Activated CD4-positive, alpha-beta T cell treated with anti-CD3 and anti-CD28 coated beads for 36 hours (primary cell): ENCODE measurements at regions of chr6 and their contacts with region 1.

Region 1: DNA sequence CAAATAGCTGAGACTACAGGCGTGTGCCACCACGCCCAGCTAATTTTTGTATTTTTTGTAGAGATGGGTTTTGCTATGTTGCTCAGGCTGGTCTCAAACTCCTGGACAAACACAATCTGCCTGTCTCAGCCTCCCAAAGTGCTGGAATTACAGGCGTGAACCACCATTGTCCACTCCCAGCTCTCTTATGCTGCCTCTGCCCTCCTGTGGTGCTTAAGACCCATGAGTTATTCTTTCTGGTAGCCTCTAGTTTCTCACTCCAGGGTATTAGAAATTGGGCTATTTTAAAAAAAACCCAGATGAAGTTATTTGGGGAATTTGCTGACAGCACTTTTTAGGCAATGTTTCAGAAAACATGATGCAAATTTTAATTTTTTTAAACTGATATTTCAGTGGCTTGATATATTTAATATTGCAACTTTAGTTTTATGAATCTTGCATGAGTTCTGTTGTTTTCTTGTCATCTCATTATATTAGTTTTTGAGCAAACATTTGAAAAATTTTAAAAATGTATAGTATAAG is 114.0 kb upstream of the FOXO3 start:
- DNase-seq: no peak
- ATAC-seq: no peak
- H3K4me3 Mint-ChIP-seq: no peak overlapping the region
- H3K27ac Mint-ChIP-seq: no peak overlapping the region
- H3K4me1 Mint-ChIP-seq: peaks cover 23% of the 10 kb centered on the region
- H3K27me3 Mint-ChIP-seq: peaks cover 30% of the 10 kb centered on the region

Region 2: GRCh38 chr6:107964671-107965340 is 481.9 kb before region 1 on chr6:
- CTCF ChIA-PET with region 1: no interaction called
- POLR2A ChIA-PET with region 1: no interaction called
- intact Hi-C with region 1: loop called in 1 of 2 experiments (anchors 1 kb)
- DNase-seq: peak; percentile 90
- ATAC-seq: peak; percentile 96
- H3K4me3 Mint-ChIP-seq: no peak overlapping the region
- H3K27ac Mint-ChIP-seq: peak overlapping the region; percentile 88
- H3K4me1 Mint-ChIP-seq: peaks cover 25% of the 10 kb centered on the region
- H3K27me3 Mint-ChIP-seq: peaks cover 2% of the 10 kb centered on the region

Region 3: DNA sequence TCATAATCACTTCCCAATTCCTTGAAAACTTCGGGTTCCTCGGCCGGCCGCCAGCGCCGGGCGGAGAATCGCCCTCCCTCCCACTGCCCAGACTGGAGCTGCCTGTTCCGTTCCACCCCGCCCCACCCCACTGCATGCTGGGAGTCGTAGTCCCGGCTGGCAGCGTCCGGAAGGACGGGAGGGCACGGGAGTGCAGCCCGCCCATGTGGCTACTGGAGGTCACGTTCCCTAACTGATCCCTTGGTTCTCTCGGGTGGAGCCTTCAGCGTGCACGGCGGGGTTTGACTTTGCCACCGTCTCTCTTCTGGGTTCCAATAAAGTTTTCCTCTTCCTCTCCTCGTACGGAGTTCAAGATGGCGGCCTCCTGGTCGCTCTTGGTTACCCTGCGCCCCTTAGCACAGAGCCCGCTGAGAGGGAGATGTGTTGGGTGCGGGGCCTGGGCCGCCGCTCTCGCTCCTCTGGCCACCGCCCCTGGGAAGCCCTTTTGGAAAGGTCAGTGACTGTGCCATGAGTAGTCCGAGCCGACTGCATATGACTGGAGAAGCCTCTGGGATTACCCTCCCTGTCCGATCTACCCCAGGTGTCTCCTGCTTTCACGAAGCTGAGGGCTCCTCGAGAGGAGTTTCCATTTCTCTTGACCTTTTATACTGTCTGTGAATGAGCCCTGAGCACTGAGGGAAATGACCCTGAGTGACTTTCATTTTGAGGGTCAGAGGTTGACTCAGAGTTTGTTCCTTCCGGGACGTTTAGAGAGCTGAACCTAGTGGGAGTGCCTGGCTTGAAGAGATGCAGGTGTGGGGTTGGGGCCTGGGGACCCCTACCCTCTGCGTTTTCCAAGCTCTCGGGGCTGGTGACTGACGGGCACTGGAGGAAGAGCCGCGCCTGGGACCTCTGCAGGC is 151.7 kb before region 1 on chr6 and contains the start of gene AFG1L:
- CTCF ChIA-PET with region 1: no interaction called
- POLR2A ChIA-PET with region 1: no interaction called
- intact Hi-C with region 1: loop called in 1 of 2 experiments (anchors 1 kb)
- DNase-seq: peak; percentile 93
- ATAC-seq: peak; percentile 92
- H3K4me3 Mint-ChIP-seq: peak within 1 kb of the TSS; percentile 99
- H3K27ac Mint-ChIP-seq: peak within 1 kb of the TSS; percentile 100
- H3K4me1 Mint-ChIP-seq: peaks cover 13% of the 10 kb centered on the region
- H3K27me3 Mint-ChIP-seq: no peaks in the 10 kb centered on the region
- total RNA-seq, gene AFG1L: 6.6 TPM

Region 4: GRCh38 chr6:108476847-108477430 is 30.2 kb after region 1 on chr6:
- CTCF ChIA-PET with region 1: interaction called, 8 read pairs
- POLR2A ChIA-PET with region 1: interaction called, 11 read pairs
- intact Hi-C with region 1: loop called (anchors 1 kb)
- DNase-seq: no peak
- ATAC-seq: no peak
- H3K4me3 Mint-ChIP-seq: no peak overlapping the region
- H3K27ac Mint-ChIP-seq: no peak overlapping the region
- H3K4me1 Mint-ChIP-seq: peaks cover 4% of the 10 kb centered on the region
- H3K27me3 Mint-ChIP-seq: peaks cover 1% of the 10 kb centered on the region